CD8-positive, alpha-beta T cell (primary cell): ENCODE measurements at regions of chr15 and their contacts with region 1.

Region 1: DNA sequence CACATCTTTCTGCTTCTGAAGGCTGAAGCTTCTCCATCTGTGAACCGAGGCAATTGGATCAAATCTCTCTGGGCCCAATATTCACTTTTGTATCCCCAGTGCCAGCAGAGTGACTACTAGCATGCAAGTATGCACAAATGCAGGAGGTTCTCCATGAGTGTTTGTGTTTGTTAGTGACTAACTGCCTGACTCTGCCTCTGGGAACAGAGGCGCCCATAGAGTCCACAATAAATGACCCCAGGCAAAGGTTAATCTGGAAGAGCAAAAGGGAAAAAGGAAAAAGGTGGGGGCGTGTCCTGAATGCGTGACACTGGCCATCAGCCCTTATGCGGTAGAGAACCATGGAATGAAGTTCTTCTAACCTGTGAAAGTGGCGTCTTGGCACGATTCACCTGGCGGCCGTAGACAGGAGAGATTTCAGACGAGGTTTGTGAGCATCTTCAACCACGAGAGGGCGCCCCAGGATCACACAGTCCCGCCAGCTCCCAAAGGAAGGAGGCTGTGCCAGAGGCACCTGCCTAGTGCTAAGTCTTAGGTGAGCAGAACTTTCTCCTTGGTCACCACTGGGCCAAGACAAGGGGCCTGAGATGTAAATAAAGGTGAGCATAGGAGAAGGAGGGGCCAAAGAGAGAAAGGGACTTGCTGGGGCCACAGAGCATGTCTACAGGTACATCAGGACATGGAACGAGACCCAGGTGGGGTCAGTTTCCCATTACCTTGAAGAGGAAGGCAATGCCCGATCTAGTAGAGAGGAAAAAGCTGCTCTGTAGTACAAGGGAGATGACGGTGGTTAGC is 44.2 kb downstream of the RBPMS2 start:
- DNase-seq: peak; percentile 68 to 93 (median 86)
- ATAC-seq: peak; percentile 77
- H3K4me3 ChIP-seq: no peak overlapping the region
- H3K4me3 Mint-ChIP-seq: no peak overlapping the region
- H3K27ac ChIP-seq: no peak overlapping the region
- H3K27ac Mint-ChIP-seq: no peak overlapping the region
- H3K4me1 ChIP-seq: no peaks in the 10 kb centered on the region
- H3K4me1 Mint-ChIP-seq: peaks cover 5% of the 10 kb centered on the region
- H3K27me3 ChIP-seq: no peaks in the 10 kb centered on the region
- H3K27me3 Mint-ChIP-seq: no peaks in the 10 kb centered on the region
- CTCF ChIP-seq: peak; percentile 98

Region 2: GRCh38 chr15:64315136-64315660 is 416.0 kb before region 1 on chr15:
- CTCF ChIA-PET with region 1: no interaction called
- POLR2A ChIA-PET with region 1: no interaction called
- intact Hi-C with region 1: no loop called
- DNase-seq: no peak
- ATAC-seq: no peak
- H3K4me3 ChIP-seq: no peak overlapping the region
- H3K4me3 Mint-ChIP-seq: no peak overlapping the region
- H3K27ac ChIP-seq: no peak overlapping the region
- H3K27ac Mint-ChIP-seq: peak overlapping the region; percentile 29
- H3K4me1 ChIP-seq: no peaks in the 10 kb centered on the region
- H3K4me1 Mint-ChIP-seq: peaks cover 25% of the 10 kb centered on the region
- H3K27me3 ChIP-seq: no peaks in the 10 kb centered on the region
- H3K27me3 Mint-ChIP-seq: no peaks in the 10 kb centered on the region
- CTCF ChIP-seq: no peak

Region 3: DNA sequence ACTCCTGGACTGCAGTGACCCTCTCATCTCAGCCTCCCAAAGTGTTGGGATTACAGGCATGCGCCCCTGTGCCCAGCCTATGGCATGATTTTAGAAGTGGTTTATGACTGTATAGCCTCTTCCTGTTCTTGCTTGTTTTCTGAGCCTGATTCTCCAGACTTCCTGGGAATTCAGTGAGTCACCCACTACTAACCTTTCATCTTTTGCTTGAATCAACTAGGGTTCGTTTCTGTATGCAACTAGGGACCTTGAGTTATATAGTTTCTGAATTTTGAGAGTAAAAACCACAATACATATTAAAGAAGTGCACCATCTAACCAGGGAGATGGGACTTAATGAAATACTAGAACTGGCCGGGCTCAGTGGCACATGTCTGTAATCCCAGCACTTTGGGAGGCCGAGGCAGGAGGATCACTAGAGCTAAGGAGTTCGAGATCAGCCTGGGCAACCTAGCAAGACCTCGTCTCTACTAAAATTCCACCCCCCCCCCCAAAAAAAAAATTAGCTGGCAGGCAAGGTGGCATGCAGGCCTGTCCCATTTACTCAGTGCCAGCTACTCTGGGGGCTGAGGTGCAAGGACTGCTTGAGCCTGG is 194.9 kb before region 1 on chr15:
- CTCF ChIA-PET with region 1: no interaction called
- POLR2A ChIA-PET with region 1: no interaction called
- intact Hi-C with region 1: no loop called
- DNase-seq: no peak
- ATAC-seq: no peak
- H3K4me3 ChIP-seq: no peak overlapping the region
- H3K4me3 Mint-ChIP-seq: no peak overlapping the region
- H3K27ac ChIP-seq: no peak overlapping the region
- H3K27ac Mint-ChIP-seq: no peak overlapping the region
- H3K4me1 ChIP-seq: peaks cover 35% of the 10 kb centered on the region
- H3K4me1 Mint-ChIP-seq: peaks cover 48% of the 10 kb centered on the region
- H3K27me3 ChIP-seq: no peaks in the 10 kb centered on the region
- H3K27me3 Mint-ChIP-seq: no peaks in the 10 kb centered on the region
- CTCF ChIP-seq: no peak

Region 4: DNA sequence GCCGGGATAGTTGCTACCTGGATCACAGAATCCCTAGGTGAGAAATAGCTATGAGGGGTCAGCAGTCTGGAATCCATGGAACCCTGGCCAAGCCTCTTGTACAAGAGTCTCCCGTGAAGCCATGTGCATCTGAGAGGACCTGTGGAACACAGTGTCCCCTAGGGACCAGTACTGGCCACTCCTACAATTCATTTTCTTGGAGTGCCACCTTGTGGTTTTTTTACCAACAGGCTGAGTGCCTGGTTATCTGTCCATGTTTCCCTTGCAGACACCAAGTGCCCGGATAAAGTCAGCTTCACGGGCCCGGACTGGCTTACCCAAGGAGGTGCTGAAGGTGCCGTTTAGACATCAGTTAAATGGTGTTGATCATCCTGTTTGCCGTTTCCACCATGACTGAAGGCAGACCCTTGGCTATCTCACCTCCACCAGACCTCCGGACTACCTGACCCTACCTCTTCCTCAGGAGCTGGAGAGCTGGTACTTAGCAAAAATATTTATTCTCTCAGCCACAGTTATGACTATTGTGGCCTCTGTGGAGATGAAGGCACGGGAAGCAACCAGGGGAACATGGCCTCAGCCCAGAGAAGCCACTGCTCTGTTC is 49.7 kb before region 1 on chr15:
- CTCF ChIA-PET with region 1: interaction called, 355 read pairs
- POLR2A ChIA-PET with region 1: no interaction called
- intact Hi-C with region 1: loop called (anchors 1 kb)
- DNase-seq: peak in 2 of 9 experiments; percentile 26 to 38
- ATAC-seq: no peak
- H3K4me3 ChIP-seq: no peak overlapping the region
- H3K4me3 Mint-ChIP-seq: no peak overlapping the region
- H3K27ac ChIP-seq: no peak overlapping the region
- H3K27ac Mint-ChIP-seq: peak overlapping the region; percentile 62
- H3K4me1 ChIP-seq: no peaks in the 10 kb centered on the region
- H3K4me1 Mint-ChIP-seq: peaks cover 3% of the 10 kb centered on the region
- H3K27me3 ChIP-seq: no peaks in the 10 kb centered on the region
- H3K27me3 Mint-ChIP-seq: no peaks in the 10 kb centered on the region
- CTCF ChIP-seq: no peak

Region 5: GRCh38 chr15:64710664-64711428 is 20.4 kb before region 1 on chr15:
- CTCF ChIA-PET with region 1: interaction called, 30 read pairs
- POLR2A ChIA-PET with region 1: no interaction called
- intact Hi-C with region 1: no loop called
- DNase-seq: no peak
- ATAC-seq: no peak
- H3K4me3 ChIP-seq: no peak overlapping the region
- H3K4me3 Mint-ChIP-seq: no peak overlapping the region
- H3K27ac ChIP-seq: no peak overlapping the region
- H3K27ac Mint-ChIP-seq: no peak overlapping the region
- H3K4me1 ChIP-seq: no peaks in the 10 kb centered on the region
- H3K4me1 Mint-ChIP-seq: no peaks in the 10 kb centered on the region
- H3K27me3 ChIP-seq: no peaks in the 10 kb centered on the region
- H3K27me3 Mint-ChIP-seq: no peaks in the 10 kb centered on the region
- CTCF ChIP-seq: no peak

Region 6: DNA sequence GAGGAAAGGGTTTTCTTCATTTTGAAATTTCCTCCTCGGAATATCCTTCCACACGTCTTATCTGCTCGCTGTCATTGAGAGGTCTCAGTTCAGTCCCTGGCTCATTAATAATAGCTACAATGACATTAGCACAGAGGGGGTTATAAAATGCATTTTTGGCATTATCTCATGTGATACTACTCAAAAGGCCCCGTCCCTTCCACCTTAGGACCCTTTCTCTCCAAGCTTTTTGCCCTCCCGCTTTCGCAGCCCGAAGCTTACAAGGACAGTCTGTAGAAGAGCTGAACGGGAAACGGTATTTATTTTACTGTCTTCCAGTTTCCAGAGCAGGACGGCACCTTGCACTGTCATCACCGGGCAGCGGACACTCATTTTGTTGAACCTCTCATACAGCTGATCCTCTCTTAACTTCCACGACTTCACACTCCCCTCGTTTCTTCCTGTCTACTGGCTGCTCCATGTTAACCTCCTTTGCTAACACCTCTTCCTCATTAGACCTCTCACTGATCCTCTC is 104.9 kb after region 1 on chr15:
- CTCF ChIA-PET with region 1: interaction called, 14 read pairs
- POLR2A ChIA-PET with region 1: no interaction called
- intact Hi-C with region 1: loop called in 1 of 2 experiments (anchors 1 kb)
- DNase-seq: no peak
- ATAC-seq: no peak
- H3K4me3 ChIP-seq: no peak overlapping the region
- H3K4me3 Mint-ChIP-seq: no peak overlapping the region
- H3K27ac ChIP-seq: no peak overlapping the region
- H3K27ac Mint-ChIP-seq: peak overlapping the region; percentile 43
- H3K4me1 ChIP-seq: peaks cover 53% of the 10 kb centered on the region
- H3K4me1 Mint-ChIP-seq: peaks cover 49% of the 10 kb centered on the region
- H3K27me3 ChIP-seq: no peaks in the 10 kb centered on the region
- H3K27me3 Mint-ChIP-seq: no peaks in the 10 kb centered on the region
- CTCF ChIP-seq: no peak

Region 7: DNA sequence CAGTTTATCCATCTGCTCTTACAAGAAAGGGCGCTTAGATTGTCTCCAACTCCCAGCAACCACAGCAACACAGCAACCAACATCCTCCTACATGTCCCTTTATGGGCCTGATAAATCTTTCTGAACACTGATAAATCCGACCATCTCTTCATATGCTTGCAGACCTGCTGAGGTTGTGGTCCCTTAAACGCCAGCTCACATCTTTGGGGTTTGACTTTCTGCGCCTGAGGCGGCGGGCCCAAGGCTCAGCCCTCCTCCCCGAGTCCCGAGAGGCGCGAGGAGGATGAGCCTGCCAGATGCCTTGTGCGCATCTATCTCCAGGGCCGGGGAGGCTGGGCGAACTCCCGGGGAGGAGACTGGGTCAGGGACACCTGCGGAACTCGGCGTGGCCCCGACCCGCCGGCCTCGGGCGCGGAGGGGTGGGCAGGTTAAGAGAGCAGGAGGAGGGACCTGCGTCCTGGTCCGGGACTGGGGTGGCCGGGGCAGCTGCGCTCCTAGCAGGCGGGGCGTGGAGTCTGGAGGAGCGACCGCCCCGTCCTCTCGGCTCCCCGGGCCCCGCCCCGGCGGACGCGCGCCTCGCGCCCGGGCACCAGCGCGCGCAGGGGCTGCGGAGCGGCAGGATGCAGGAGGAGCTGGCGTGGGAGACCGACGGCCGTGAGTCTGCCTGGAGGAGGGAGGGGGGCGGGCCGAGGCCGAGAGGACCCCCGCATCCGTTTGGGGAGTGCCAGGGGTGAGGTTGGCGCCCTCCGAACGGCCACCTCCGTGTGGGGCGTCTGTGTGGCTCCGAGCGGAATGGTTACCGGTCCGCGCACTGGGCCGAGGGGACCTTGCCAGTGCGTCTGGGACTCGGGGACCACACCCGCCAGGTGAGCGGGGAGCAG is 180.3 kb after region 1 on chr15 and contains the start of gene ANKDD1A:
- CTCF ChIA-PET with region 1: interaction called, 154 read pairs
- POLR2A ChIA-PET with region 1: no interaction called
- intact Hi-C with region 1: no loop called
- DNase-seq: peak in 6 of 9 experiments; percentile 11 to 55 (median 34)
- ATAC-seq: peak; percentile 80
- H3K4me3 ChIP-seq: peak within 1 kb of the TSS; percentile 25 to 44
- H3K4me3 Mint-ChIP-seq: peak within 1 kb of the TSS; percentile 72
- H3K27ac ChIP-seq: no peak within 1 kb of the TSS
- H3K27ac Mint-ChIP-seq: no peak within 1 kb of the TSS
- H3K4me1 ChIP-seq: peaks cover 4% of the 10 kb centered on the region
- H3K4me1 Mint-ChIP-seq: peaks cover 7% of the 10 kb centered on the region
- H3K27me3 ChIP-seq: no peaks in the 10 kb centered on the region
- H3K27me3 Mint-ChIP-seq: peaks cover 12% of the 10 kb centered on the region
- CTCF ChIP-seq: no peak
- total RNA-seq, gene ANKDD1A: 3.6 to 4.1 TPM

Region 8: DNA sequence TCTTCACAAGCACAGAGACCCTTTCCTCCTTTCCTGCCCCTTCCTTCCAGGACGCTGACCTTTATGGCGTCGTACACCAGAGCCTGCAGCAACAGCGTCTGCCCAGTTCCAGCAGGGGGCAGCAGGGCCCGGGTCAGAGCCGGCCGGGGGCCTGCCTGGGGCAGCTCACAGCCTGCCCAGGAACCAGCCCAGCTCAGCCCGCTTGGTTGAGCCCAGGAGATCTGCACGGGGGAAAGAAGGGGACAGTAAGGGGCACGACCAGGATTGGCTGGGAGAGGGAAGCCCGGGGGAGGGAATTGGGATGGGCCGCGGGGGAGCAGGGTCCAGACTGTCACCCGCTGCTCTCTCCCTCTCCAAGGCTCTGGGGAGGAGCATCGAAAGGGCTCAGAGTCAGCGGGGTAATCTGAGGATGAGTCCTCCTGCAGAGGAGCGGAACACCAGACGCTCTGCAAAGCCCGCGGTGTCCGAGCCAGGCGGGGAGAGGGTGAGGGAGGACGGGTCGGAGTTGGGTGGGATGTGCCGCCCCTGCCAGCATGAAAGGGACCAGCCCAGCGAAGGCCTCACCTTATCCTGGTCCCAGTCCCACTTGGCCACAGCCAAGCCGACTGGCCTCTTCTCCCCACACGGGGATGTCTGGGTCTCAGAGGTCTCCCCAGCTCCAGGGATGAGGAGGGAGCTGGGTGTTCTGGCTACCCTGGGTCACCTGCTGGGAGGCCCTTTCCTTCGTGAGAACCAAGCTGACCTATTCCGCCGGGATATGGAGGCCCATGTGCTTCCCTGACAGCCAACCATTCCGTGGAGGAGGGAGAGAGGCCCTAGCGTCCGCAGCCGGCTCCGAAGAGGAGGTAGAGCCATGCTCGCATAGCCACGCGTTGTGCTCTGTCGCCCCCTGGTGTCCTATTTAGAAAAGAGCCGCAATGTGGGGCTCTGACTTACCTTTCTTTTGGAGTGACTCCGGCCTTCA is 654.0 kb after region 1 on chr15:
- CTCF ChIA-PET with region 1: no interaction called
- POLR2A ChIA-PET with region 1: no interaction called
- intact Hi-C with region 1: loop called in 1 of 2 experiments (anchors 2 kb)
- DNase-seq: peak; percentile 68 to 88 (median 83)
- ATAC-seq: peak; percentile 88
- H3K4me3 ChIP-seq: peak overlapping the region; percentile 72 to 89
- H3K4me3 Mint-ChIP-seq: peak overlapping the region; percentile 90
- H3K27ac ChIP-seq: peak overlapping the region; percentile 1 to 60
- H3K27ac Mint-ChIP-seq: peak overlapping the region; percentile 18
- H3K4me1 ChIP-seq: peaks cover 7% of the 10 kb centered on the region
- H3K4me1 Mint-ChIP-seq: peaks cover 12% of the 10 kb centered on the region
- H3K27me3 ChIP-seq: no peaks in the 10 kb centered on the region
- H3K27me3 Mint-ChIP-seq: peaks cover 13% of the 10 kb centered on the region
- CTCF ChIP-seq: peak; percentile 78

Region 9: GRCh38 chr15:65598468-65598867 is 867.3 kb after region 1 on chr15:
- CTCF ChIA-PET with region 1: no interaction called
- POLR2A ChIA-PET with region 1: no interaction called
- intact Hi-C with region 1: no loop called
- DNase-seq: no peak
- ATAC-seq: no peak
- H3K4me3 ChIP-seq: no peak overlapping the region
- H3K4me3 Mint-ChIP-seq: no peak overlapping the region
- H3K27ac ChIP-seq: no peak overlapping the region
- H3K27ac Mint-ChIP-seq: no peak overlapping the region
- H3K4me1 ChIP-seq: no peaks in the 10 kb centered on the region
- H3K4me1 Mint-ChIP-seq: no peaks in the 10 kb centered on the region
- H3K27me3 ChIP-seq: no peaks in the 10 kb centered on the region
- H3K27me3 Mint-ChIP-seq: no peaks in the 10 kb centered on the region
- CTCF ChIP-seq: no peak